Right cardiac atrium (tissue), 5 donors: ENCODE measurements at regions of chr17 and their contacts with region 1.

Region 1: GRCh38 chr17:28750178-28751047 is 6.6 kb downstream of the TRAF4 start:
- DNase-seq: peak; percentile 90 to 98 (median 96)
- ATAC-seq: peak; percentile 67 to 78
- H3K4me3 ChIP-seq: no peak overlapping the region
- H3K27ac ChIP-seq: no peak overlapping the region
- H3K4me1 ChIP-seq: peaks cover 1% of the 10 kb centered on the region
- H3K27me3 ChIP-seq: no peaks in the 10 kb centered on the region

Region 2: DNA sequence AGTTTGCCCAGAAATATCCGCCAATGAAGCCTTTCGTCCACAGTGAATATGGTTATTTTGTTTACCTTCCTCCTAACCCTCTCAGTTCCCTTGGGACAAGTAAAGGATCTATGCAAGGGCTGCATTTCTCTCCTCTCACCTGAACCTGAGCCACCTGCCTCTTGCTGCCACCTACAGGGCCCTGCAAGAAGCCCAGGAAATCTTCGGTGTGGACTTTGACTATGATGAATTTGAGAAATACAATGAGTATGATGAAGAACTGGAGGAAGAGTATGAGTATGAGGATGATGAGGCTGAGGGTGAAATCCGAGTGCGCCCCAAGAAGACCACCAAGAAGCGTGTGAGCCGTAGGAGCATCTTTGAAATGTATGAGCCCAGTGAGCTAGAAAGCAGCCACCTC is 74.4 kb before region 1 on chr17:
- intact Hi-C with region 1: no loop called
- DNase-seq: no peak
- ATAC-seq: no peak
- H3K4me3 ChIP-seq: no peak overlapping the region
- H3K27ac ChIP-seq: no peak overlapping the region
- H3K4me1 ChIP-seq: no peaks in the 10 kb centered on the region
- H3K27me3 ChIP-seq: no peaks in the 10 kb centered on the region

Region 3: DNA sequence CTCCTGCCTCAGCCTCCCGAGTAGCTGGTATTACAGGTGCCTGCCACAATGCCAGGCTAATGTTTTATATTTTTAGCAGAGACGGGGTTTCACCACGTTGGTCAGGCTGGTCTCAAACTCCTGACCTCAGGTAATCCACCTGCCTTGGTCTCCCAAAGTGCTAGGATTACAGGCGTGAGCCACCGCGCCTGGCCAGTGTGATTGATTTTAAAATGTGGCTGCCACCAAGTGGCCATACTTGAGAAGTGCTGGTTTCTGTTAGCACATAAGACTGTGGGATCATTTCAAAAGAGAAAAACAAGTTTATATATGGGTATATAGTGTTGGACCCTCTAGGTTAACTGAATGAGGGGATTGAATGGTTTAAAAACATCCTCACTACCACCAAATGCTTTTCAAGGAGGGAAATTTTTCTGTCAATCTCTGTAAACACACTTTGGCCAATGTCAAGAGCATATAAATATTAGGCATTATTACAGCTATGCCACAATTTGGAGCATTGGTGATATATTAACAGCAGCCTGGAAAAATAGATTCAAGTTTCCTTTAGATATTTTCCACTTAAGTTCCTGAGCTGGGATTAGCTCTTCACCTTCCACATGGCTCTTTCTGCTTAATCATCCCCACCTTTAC is 166.0 kb after region 1 on chr17:
- intact Hi-C with region 1: loop called in 1 of 4 experiments (anchors 10 kb)
- DNase-seq: peak in 1 of 3 donors; percentile 77
- ATAC-seq: peak; percentile 44 to 54
- H3K4me3 ChIP-seq: no peak overlapping the region
- H3K27ac ChIP-seq: no peak overlapping the region
- H3K4me1 ChIP-seq: no peaks in the 10 kb centered on the region
- H3K27me3 ChIP-seq: no peaks in the 10 kb centered on the region